ENCODE measurements at regions of chr5 and their contacts with region 1.

Region 1: DNA sequence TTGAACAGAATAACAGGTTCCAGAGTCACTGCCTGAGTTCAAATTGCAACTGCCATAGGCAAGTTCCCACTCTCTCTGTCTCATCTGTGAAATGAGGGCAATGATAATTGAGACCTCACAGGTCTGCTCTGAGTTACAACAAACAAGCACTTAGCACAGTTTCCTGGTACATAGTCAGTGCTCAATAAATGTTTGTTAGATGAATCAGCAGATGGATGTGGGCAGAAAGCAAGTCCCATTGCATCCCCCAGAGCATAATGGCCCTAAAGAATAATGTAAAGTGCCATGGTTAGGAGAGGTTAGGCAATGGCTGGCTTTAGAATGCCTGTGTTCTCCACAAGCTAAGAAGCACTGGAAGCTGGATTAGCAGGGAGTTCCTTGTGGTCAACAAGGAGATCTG is 136.5 kb upstream of the LARP1 start:
- DNase-seq: no peak
- ATAC-seq: peak; percentile 34; the same call in 1 of the 2 replicates
- H3K4me3 ChIP-seq: no peak overlapping the region
- H3K27ac ChIP-seq: no peak overlapping the region
- H3K4me1 ChIP-seq: 0 out of 2 replicates have a peak, but pooled peaks cover 3% of the 10 kb centered on the region
- H3K27me3 ChIP-seq: peaks cover 15% of the 10 kb centered on the region
- CTCF ChIP-seq: no peak

Region 2: DNA sequence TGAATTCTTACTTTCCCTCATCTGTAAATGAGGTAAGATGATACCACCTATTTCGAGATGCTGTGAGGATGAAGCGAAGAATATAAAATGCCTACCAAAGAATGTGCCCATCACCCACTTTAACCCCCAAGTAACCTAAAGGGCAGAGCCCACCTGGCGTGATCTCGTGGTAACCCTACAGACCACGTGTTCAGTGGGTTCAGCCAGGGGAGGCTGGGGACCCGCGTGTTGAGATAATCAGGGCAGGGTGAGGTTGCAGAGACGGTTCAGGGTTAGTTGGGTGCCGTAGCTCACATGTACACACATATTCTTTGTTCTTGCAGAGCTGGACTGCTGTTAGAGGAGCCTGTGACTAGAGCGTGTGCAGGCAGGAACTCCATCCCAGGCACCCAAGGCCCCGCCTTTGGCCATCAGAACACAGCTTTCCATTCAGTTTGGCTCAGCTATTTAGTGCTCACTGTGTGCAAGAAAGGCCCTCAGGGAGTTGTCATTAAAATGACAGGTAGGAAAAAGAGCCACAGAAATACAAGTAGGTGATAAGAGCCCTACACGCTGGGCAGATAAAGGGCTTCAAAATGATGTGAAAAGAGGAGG is 84.1 kb before region 1 on chr5:
- CTCF ChIA-PET with region 1: no interaction called
- POLR2A ChIA-PET with region 1: interaction called, 14 read pairs
- in situ Hi-C with region 1: no loop called
- intact Hi-C with region 1: no loop called
- DNase-seq: no peak
- ATAC-seq: peak; percentile 34; the same call in 1 of the 2 replicates
- H3K4me3 ChIP-seq: no peak overlapping the region
- H3K27ac ChIP-seq: no peak overlapping the region
- H3K4me1 ChIP-seq: no peaks in the 10 kb centered on the region
- H3K27me3 ChIP-seq: no peaks in the 10 kb centered on the region
- CTCF ChIP-seq: no peak

Region 3: GRCh38 chr5:155049569-155050383 is 431.1 kb after region 1 on chr5:
- CTCF ChIA-PET with region 1: no interaction called
- POLR2A ChIA-PET with region 1: no interaction called
- in situ Hi-C with region 1: no loop called
- intact Hi-C with region 1: no loop called
- DNase-seq: no peak
- ATAC-seq: 0 out of 2 replicates have a peak, but pooled peaks have one; percentile 54
- H3K4me3 ChIP-seq: no peak overlapping the region
- H3K27ac ChIP-seq: no peak overlapping the region
- H3K4me1 ChIP-seq: no peaks in the 10 kb centered on the region
- H3K27me3 ChIP-seq: peaks cover 6% of the 10 kb centered on the region
- CTCF ChIP-seq: peak; percentile 53